ENCODE measurements at regions of chr2 and their contacts with region 1.

Region 1: GRCh38 chr2:117814417-117815264 is at the start of gene DDX18:
- DNase-seq: peak; percentile 100
- ATAC-seq: peak; percentile 84
- H3K4me3 ChIP-seq: peak within 1 kb of the TSS; percentile 60 to 85 (median 68)
- H3K4me3 Mint-ChIP-seq: peak within 1 kb of the TSS; percentile 88
- H3K27ac ChIP-seq: peak within 1 kb of the TSS; percentile 96 to 99
- H3K27ac Mint-ChIP-seq: peak within 1 kb of the TSS; percentile 95
- H3K4me1 ChIP-seq: peaks cover 24 to 25% of the 10 kb centered on the region in 2 donors
- H3K4me1 Mint-ChIP-seq: peaks cover 46% of the 10 kb centered on the region
- H3K27me3 ChIP-seq: no peaks in the 10 kb centered on the region
- H3K27me3 Mint-ChIP-seq: no peaks in the 10 kb centered on the region
- CTCF ChIP-seq: peak; percentile 99
- total RNA-seq, gene DDX18: 94.7 and 98.0 TPM in 2 replicates

Region 2: DNA sequence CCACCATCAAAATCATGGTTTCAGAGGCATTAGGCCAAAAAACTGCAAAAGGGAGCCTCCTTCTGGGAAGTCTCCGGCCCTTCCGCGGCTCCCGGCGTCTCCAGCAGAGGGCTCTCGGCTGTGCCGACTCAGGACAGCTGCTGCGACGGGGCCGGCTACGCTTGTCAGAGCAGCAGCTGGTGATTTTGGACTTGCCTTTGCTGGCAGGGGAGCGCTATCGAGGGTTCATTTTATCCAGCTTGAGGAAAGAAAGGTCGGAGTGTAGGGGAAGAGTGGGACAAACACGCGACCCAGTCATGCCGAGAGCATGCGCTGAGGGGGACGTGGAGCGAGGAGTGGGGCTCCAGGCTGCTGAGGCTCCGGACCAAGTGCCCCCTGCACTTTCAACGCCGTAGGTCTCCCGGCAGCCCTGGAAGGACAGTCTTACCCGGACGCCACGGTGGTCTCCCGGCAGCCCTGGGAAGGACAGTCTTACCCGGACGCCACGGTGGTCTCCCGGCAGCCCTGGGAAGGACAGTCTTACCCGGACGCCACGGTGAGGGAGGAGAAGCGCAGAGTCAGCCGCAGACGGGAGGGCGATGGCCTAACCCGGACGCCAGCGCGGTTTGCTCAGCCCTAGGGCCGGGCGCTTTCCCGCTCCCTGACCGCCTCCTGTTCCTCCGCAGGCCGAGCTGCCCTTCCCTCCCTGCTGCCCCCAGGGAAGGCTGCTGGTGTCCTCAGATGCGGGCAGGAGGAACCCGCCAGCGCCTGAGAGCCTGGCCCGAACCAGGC is 21.5 kb after region 1 on chr2:
- CTCF ChIA-PET with region 1: interaction called, 14 read pairs
- POLR2A ChIA-PET with region 1: no interaction called
- intact Hi-C with region 1: loop called (anchors 2 kb)
- DNase-seq: peak; percentile 76
- ATAC-seq: peak; percentile 78
- H3K4me3 ChIP-seq: peak overlapping the region in 3 of 5 experiments; percentile 12 to 35 (median 19)
- H3K4me3 Mint-ChIP-seq: peak overlapping the region; percentile 87
- H3K27ac ChIP-seq: no peak overlapping the region
- H3K27ac Mint-ChIP-seq: peak overlapping the region; percentile 34
- H3K4me1 ChIP-seq: peaks cover 7 to 15% of the 10 kb centered on the region in 2 donors
- H3K4me1 Mint-ChIP-seq: peaks cover 17% of the 10 kb centered on the region
- H3K27me3 ChIP-seq: peaks cover 0 to 7% (median 3%) of the 10 kb centered on the region in 4 experiments
- H3K27me3 Mint-ChIP-seq: peaks cover 6% of the 10 kb centered on the region
- CTCF ChIP-seq: peak; percentile 63

Region 3: DNA sequence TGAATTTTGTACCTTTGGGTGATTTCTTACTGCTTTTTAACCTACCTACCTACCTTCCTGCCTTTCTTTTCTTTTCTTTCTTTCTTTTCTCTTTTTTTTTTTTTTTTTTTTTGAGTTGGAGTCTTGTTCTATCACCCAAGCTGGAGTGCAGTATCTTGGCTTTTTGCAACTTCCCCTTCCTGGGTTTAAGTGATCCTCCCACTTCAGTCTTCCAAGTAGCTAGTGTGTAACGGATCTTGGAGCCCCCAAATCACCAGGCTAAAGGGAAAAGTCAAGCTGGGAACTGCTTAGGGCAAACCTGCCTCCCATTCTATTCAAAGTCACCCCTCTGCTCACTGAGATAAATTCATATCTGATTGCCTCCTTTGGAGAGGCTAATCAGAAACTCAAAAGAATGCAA is 61.1 kb after region 1 on chr2:
- CTCF ChIA-PET with region 1: no interaction called
- POLR2A ChIA-PET with region 1: no interaction called
- intact Hi-C with region 1: no loop called
- DNase-seq: no peak
- ATAC-seq: no peak
- H3K4me3 ChIP-seq: no peak overlapping the region
- H3K4me3 Mint-ChIP-seq: no peak overlapping the region
- H3K27ac ChIP-seq: no peak overlapping the region
- H3K27ac Mint-ChIP-seq: no peak overlapping the region
- H3K4me1 ChIP-seq: no peaks in the 10 kb centered on the region
- H3K4me1 Mint-ChIP-seq: no peaks in the 10 kb centered on the region
- H3K27me3 ChIP-seq: peaks cover 0 to 8% (median 4%) of the 10 kb centered on the region in 4 experiments
- H3K27me3 Mint-ChIP-seq: peaks cover 34% of the 10 kb centered on the region
- CTCF ChIP-seq: no peak

Region 4: GRCh38 chr2:118003396-118003824 is 188.8 kb after region 1 on chr2:
- CTCF ChIA-PET with region 1: interaction called, 62 read pairs
- POLR2A ChIA-PET with region 1: interaction called, 5 read pairs
- intact Hi-C with region 1: loop called (anchors 1 kb)
- DNase-seq: peak; percentile 86
- ATAC-seq: peak; percentile 94
- H3K4me3 ChIP-seq: no peak overlapping the region
- H3K4me3 Mint-ChIP-seq: no peak overlapping the region
- H3K27ac ChIP-seq: peak overlapping the region in 1 of 2 donors; percentile 15
- H3K27ac Mint-ChIP-seq: peak overlapping the region; percentile 73
- H3K4me1 ChIP-seq: peaks cover 7 to 8% of the 10 kb centered on the region in 2 donors
- H3K4me1 Mint-ChIP-seq: peaks cover 7% of the 10 kb centered on the region
- H3K27me3 ChIP-seq: no peaks in the 10 kb centered on the region
- H3K27me3 Mint-ChIP-seq: no peaks in the 10 kb centered on the region
- CTCF ChIP-seq: peak; percentile 91

Region 5: GRCh38 chr2:118088051-118089024 is 273.7 kb after region 1 on chr2 and contains the start of gene INSIG2:
- CTCF ChIA-PET with region 1: interaction called, 3 read pairs
- POLR2A ChIA-PET with region 1: no interaction called
- intact Hi-C with region 1: loop called (anchors 1 kb)
- DNase-seq: peak; percentile 94
- ATAC-seq: peak; percentile 86
- H3K4me3 ChIP-seq: peak within 1 kb of the TSS; percentile 81 to 95 (median 82)
- H3K4me3 Mint-ChIP-seq: peak within 1 kb of the TSS; percentile 93
- H3K27ac ChIP-seq: peak within 1 kb of the TSS; percentile 60 to 71
- H3K27ac Mint-ChIP-seq: peak within 1 kb of the TSS; percentile 88
- H3K4me1 ChIP-seq: peaks cover 17 to 20% of the 10 kb centered on the region in 2 donors
- H3K4me1 Mint-ChIP-seq: peaks cover 30% of the 10 kb centered on the region
- H3K27me3 ChIP-seq: no peaks in the 10 kb centered on the region
- H3K27me3 Mint-ChIP-seq: no peaks in the 10 kb centered on the region
- CTCF ChIP-seq: peak; percentile 18
- total RNA-seq, gene INSIG2: 26.5 and 29.5 TPM in 2 replicates

Region 6: DNA sequence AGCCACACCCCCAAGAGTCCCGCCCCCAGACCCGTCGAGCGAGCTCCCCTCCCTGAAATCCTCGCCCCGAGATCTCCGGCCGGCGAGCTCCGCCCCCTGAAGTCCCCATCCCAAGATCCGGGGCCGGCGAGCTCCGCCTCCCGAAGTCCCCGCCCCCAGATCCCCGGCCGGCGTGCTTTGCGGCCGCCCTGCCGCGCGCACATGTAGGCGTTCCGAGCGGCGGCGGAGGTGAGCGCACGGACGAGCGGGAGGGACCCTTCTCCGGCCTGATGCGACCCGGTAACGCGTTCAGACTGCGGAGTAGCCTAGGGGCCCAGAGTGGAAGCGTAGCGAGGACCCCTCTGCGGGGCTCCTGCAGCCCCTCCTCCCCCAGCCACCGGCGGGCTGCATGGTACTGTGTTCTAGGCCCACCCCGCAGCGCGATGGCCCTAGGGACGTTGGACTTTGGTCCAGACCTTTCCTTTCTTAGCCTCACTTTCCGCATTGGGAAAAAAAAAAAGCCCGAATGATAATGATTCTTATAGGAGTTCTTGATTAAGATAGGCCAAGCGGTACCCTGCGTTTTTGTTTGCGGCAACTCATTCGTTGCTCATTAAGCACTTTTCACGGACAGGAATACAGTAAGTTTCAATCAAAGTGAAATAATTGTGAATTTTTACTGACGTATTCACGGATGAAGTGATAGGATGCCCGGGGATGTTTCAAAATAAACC is 1864.5 kb after region 1 on chr2 and contains the start of gene TMEM177:
- CTCF ChIA-PET with region 1: no interaction called
- POLR2A ChIA-PET with region 1: no interaction called
- intact Hi-C with region 1: loop called (anchors 2 kb)
- DNase-seq: peak; percentile 90
- ATAC-seq: peak; percentile 96
- H3K4me3 ChIP-seq: peak within 1 kb of the TSS; percentile 76 to 100 (median 93)
- H3K4me3 Mint-ChIP-seq: peak within 1 kb of the TSS; percentile 84
- H3K27ac ChIP-seq: peak within 1 kb of the TSS; percentile 50 to 60
- H3K27ac Mint-ChIP-seq: peak within 1 kb of the TSS; percentile 84
- H3K4me1 ChIP-seq: peaks cover 10 to 20% of the 10 kb centered on the region in 2 donors
- H3K4me1 Mint-ChIP-seq: peaks cover 23% of the 10 kb centered on the region
- H3K27me3 ChIP-seq: no peaks in the 10 kb centered on the region
- H3K27me3 Mint-ChIP-seq: no peaks in the 10 kb centered on the region
- CTCF ChIP-seq: no peak
- total RNA-seq, gene TMEM177: 10.6 and 12.1 TPM in 2 replicates